K562 (cell line): ENCODE measurements at regions of chr13 and their contacts with region 1.

Region 1: DNA sequence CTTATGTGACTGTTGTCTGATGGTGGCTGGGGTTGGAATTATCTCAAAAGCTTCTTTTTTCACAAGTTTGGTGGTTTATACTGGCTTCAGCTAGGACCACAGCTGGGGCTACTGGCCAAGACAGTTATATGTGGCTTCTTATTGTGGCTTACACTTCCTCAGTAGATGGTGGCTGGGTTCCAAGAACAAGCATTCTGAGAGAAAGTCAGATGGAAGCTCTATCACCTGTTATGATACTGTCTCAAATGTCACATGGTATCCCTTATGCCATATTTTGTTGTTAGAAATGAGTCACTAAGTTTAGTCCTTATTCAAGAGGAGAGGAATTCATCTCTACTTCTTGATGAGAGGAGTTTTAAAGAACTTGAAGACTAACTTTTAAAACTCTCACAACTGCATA is 41.6 kb downstream of the NDFIP2 start:
- DNase-seq: peak in 1 of 4 experiments; percentile 39
- ATAC-seq: no peak; the same call in 2 of the 3 replicates
- H3K4me3 ChIP-seq: no peak overlapping the region
- H3K27ac ChIP-seq: peak overlapping the region; percentile 53; the same call in 1 of the 3 replicates
- H3K4me1 ChIP-seq: peaks cover 0 to 12% of the 10 kb centered on the region in 2 experiments; a peak in 2 of 5 replicates
- H3K27me3 ChIP-seq: no peaks in the 10 kb centered on the region
- CTCF ChIP-seq: no peak
- EP300 ChIP-seq: no peak
- POLR2A ChIP-seq: no peak
- RAD21 ChIP-seq: no peak

Region 2: GRCh38 chr13:79480954-79481684 is 41.5 kb before region 1 on chr13 and contains the start of gene NDFIP2:
- CTCF ChIA-PET with region 1: no interaction called
- POLR2A ChIA-PET with region 1: no interaction called
- in situ Hi-C with region 1: no loop called
- intact Hi-C with region 1: loop called (anchors 5 kb)
- DNase-seq: peak; percentile 62 to 91 (median 70)
- ATAC-seq: peak; percentile 93
- H3K4me3 ChIP-seq: peak within 1 kb of the TSS; percentile 93
- H3K27ac ChIP-seq: peak within 1 kb of the TSS; percentile 83
- H3K4me1 ChIP-seq: peaks cover 12 to 23% of the 10 kb centered on the region in 2 experiments; a peak in 3 of 5 replicates
- H3K27me3 ChIP-seq: no peaks in the 10 kb centered on the region
- CTCF ChIP-seq: 0 out of 6 replicates have a peak, but pooled peaks of 1 of the 3 experiments have one; percentile 0
- EP300 ChIP-seq: no peak
- POLR2A ChIP-seq: peak; percentile 82
- RAD21 ChIP-seq: no peak
- polyA plus RNA-seq, gene NDFIP2: 25.3 to 25.6 TPM

Region 3: GRCh38 chr13:79571147-79571546 is 48.6 kb after region 1 on chr13:
- CTCF ChIA-PET with region 1: no interaction called
- POLR2A ChIA-PET with region 1: no interaction called
- in situ Hi-C with region 1: no loop called
- intact Hi-C with region 1: no loop called
- DNase-seq: no peak
- ATAC-seq: no peak
- H3K4me3 ChIP-seq: no peak overlapping the region
- H3K27ac ChIP-seq: no peak overlapping the region
- H3K4me1 ChIP-seq: no peaks in the 10 kb centered on the region
- H3K27me3 ChIP-seq: no peaks in the 10 kb centered on the region
- CTCF ChIP-seq: no peak
- EP300 ChIP-seq: no peak
- POLR2A ChIP-seq: no peak
- RAD21 ChIP-seq: no peak